Activated CD4-positive, alpha-beta T cell treated with anti-CD3 and anti-CD28 coated beads, Interleukin-2, amount 10 ng/mL, durations not matched to agents 24 days and 14 days (primary cell): ENCODE measurements at regions of chr2 and their contacts with region 1.

Region 1: DNA sequence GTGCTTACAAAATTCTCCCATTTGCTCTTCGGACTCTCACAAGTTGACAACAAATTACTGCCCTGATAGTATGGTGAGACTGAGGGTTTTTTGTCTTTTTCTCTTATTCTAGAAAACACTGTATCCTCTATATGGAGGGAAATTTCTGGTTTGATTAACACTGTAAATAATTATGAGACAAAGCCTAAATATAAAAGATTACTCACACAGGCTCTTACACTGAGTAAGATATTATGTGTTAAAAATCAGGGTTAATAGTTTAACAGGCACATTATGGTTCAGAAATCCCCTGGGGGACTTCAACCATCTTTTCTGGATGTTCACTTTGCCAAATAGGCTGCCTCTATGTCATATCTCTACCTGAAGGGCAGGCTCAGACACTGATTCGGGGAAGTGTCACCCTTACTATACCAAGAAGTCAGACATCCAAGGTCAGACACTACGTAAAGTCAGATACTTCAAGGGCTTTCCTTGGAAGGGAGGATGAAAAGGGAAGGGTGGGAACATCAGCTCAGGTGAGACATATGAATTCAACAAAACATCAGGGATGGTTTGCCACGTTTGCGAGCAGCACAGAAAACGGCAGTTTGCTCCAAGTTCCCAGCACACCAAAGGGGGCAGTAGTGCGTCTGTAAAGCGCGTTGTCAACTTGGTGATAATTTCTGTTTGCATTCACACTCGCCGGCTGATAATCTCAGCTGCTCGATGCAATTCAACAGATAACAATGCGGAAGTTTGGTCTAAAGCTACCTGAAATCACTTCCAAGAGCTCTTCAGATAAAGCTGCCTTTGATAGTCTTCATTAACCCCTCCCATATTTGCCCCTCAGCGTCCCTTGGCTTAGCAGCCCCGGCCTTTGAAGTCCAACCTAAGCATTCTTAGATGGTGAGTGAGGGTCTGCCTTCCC is 972 bp upstream of the RASGRP3 start:
- DNase-seq: peak; percentile 95
- H3K4me3 Mint-ChIP-seq: peak overlapping the region; percentile 93
- H3K27ac Mint-ChIP-seq: peak overlapping the region; percentile 99
- H3K4me1 Mint-ChIP-seq: peaks cover 28% of the 10 kb centered on the region
- H3K27me3 Mint-ChIP-seq: peaks cover 6% of the 10 kb centered on the region

Region 2: GRCh38 chr2:33488715-33489540 is 13.5 kb after region 1 on chr2:
- intact Hi-C with region 1: loop called (anchors 1 kb)
- DNase-seq: no peak
- H3K4me3 Mint-ChIP-seq: no peak overlapping the region
- H3K27ac Mint-ChIP-seq: peak overlapping the region; percentile 75
- H3K4me1 Mint-ChIP-seq: peaks cover 21% of the 10 kb centered on the region
- H3K27me3 Mint-ChIP-seq: no peaks in the 10 kb centered on the region

Region 3: GRCh38 chr2:33497221-33497650 is 21.8 kb after region 1 on chr2:
- intact Hi-C with region 1: loop called (anchors 1 kb)
- DNase-seq: peak; percentile 65
- H3K4me3 Mint-ChIP-seq: no peak overlapping the region
- H3K27ac Mint-ChIP-seq: no peak overlapping the region
- H3K4me1 Mint-ChIP-seq: peaks cover 35% of the 10 kb centered on the region
- H3K27me3 Mint-ChIP-seq: no peaks in the 10 kb centered on the region

Region 4: DNA sequence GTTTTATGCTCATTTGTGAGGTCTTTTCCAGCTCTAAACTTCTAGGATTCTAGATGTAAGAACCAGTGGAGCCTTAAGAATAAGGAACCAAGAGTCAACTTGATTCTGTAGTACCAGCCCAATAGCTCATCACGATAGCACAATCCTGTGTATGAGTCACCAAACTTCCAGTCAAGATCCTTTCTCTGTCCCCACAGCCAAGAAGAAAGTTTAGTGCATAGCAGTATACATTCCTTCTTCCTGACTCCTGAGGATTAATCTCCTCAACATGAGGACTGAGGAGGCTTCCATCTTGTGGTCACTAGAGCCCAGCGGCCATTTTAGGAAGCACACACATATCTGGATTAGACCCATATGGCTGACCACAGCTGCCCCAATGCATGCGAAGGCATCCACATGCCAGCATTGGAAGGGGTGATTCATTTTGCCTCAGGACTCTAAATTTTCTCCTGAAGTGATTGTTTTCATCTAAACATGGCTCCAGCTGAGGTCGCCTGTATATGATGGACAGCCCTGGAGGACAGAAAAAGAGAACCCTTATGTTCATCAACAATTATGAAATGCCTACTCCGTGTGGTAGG is 54.4 kb after region 1 on chr2:
- intact Hi-C with region 1: loop called (anchors 5 kb)
- DNase-seq: no peak
- H3K4me3 Mint-ChIP-seq: no peak overlapping the region
- H3K27ac Mint-ChIP-seq: no peak overlapping the region
- H3K4me1 Mint-ChIP-seq: peaks cover 22% of the 10 kb centered on the region
- H3K27me3 Mint-ChIP-seq: no peaks in the 10 kb centered on the region

Region 5: GRCh38 chr2:34241905-34242762 is 766.7 kb after region 1 on chr2:
- intact Hi-C with region 1: no loop called
- DNase-seq: no peak
- H3K4me3 Mint-ChIP-seq: no peak overlapping the region
- H3K27ac Mint-ChIP-seq: no peak overlapping the region
- H3K4me1 Mint-ChIP-seq: no peaks in the 10 kb centered on the region
- H3K27me3 Mint-ChIP-seq: no peaks in the 10 kb centered on the region